ENCODE measurements at regions of chr16 and their contacts with region 1.

Region 1: GRCh38 chr16:11255737-11256660 is at the start of gene SOCS1:
- DNase-seq: peak; percentile 87
- H3K4me3 Mint-ChIP-seq: peak within 1 kb of the TSS; percentile 96
- H3K27ac Mint-ChIP-seq: peak within 1 kb of the TSS; percentile 97
- H3K4me1 Mint-ChIP-seq: peaks cover 53% of the 10 kb centered on the region
- H3K27me3 Mint-ChIP-seq: no peaks in the 10 kb centered on the region
- total RNA-seq, gene SOCS1: 127 to 133 TPM

Region 2: GRCh38 chr16:10949370-10949970 is 306.5 kb before region 1 on chr16:
- CTCF ChIA-PET with region 1: interaction called, 11 read pairs
- POLR2A ChIA-PET with region 1: no interaction called
- DNase-seq: peak; percentile 79
- H3K4me3 Mint-ChIP-seq: no peak overlapping the region
- H3K27ac Mint-ChIP-seq: peak overlapping the region; percentile 83
- H3K4me1 Mint-ChIP-seq: peaks cover 68% of the 10 kb centered on the region
- H3K27me3 Mint-ChIP-seq: no peaks in the 10 kb centered on the region

Region 3: GRCh38 chr16:10964039-10964890 is 291.7 kb before region 1 on chr16:
- CTCF ChIA-PET with region 1: interaction called, 72 read pairs
- POLR2A ChIA-PET with region 1: interaction called, 5 read pairs
- DNase-seq: peak; percentile 85
- H3K4me3 Mint-ChIP-seq: peak overlapping the region; percentile 55
- H3K27ac Mint-ChIP-seq: peak overlapping the region; percentile 85
- H3K4me1 Mint-ChIP-seq: peaks cover 83% of the 10 kb centered on the region
- H3K27me3 Mint-ChIP-seq: no peaks in the 10 kb centered on the region

Region 4: DNA sequence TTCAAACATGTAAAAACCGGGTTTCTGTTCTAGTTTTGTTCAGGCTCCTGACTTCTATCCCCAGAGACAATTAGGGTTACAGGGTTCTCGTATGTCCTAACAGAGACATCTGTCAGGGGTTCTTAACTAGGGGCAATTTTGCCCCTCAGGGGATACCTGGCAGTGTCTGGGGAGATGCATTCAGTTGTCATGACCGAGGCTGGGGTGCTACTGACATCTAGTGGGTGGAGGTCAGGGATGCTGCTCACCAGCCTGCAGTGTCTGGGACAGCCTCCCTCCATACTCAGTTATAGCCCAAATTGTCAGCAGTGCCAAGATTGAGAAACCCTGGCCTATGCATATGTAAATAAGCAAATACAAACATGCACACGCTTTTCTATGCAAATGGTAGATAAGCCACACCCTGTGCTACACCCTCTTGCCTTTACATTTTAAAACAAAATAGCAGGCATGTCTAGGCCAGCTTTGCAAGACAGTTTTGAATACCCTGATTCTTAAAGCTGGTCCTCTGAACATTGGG is 274.2 kb before region 1 on chr16:
- CTCF ChIA-PET with region 1: interaction called, 26 read pairs
- POLR2A ChIA-PET with region 1: interaction called, 5 read pairs
- DNase-seq: peak; percentile 65
- H3K4me3 Mint-ChIP-seq: peak overlapping the region; percentile 26
- H3K27ac Mint-ChIP-seq: peak overlapping the region; percentile 68
- H3K4me1 Mint-ChIP-seq: peaks cover 87% of the 10 kb centered on the region
- H3K27me3 Mint-ChIP-seq: no peaks in the 10 kb centered on the region

Region 5: DNA sequence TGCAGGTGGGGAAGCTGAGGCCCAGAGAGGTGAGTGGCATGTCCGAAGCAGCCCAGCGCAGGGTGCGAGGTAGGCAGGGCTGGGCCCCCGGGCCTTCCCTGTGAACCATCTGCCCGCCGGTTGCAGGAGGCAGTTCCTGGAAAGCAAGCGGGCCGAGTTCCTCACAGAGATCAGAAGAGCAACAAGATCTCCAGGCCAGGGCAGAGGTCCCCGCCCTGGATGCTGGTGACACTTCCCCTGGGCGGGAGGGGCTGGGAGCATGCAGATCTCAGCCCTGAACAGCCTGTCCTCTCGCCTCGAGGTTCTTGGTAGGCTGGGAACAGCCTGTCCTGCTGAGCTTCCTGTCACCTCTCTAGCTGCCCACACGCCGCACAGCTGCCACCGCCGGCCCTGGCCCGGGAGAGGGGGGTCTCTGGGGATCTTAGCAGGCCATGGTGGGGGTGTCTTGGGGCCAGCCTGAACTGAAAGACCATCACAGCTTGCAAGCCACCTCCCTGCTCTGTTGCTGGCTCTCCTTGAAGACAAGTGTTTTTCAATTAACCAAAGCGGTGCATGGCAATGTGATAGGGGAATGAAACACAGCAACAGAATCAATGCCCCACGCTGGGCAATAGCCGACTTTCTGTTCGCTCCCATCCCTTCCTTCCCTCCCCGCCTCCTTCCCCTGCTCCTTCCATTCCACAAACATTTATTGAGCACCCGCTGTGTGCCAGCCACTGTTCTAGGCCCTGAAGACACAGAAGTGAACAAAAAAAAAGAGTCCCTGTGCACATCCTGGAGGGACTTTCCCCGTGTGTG is 31.7 kb before region 1 on chr16:
- CTCF ChIA-PET with region 1: interaction called, 16 read pairs
- POLR2A ChIA-PET with region 1: interaction called, 13 read pairs
- DNase-seq: peak; percentile 81
- H3K4me3 Mint-ChIP-seq: peak overlapping the region; percentile 68
- H3K27ac Mint-ChIP-seq: peak overlapping the region; percentile 100
- H3K4me1 Mint-ChIP-seq: peaks cover 82% of the 10 kb centered on the region
- H3K27me3 Mint-ChIP-seq: no peaks in the 10 kb centered on the region

Region 6: GRCh38 chr16:11245988-11246387 is 10.0 kb before region 1 on chr16:
- CTCF ChIA-PET with region 1: interaction called, 15 read pairs
- POLR2A ChIA-PET with region 1: interaction called, 6 read pairs
- DNase-seq: peak; percentile 39
- H3K4me3 Mint-ChIP-seq: no peak overlapping the region
- H3K27ac Mint-ChIP-seq: no peak overlapping the region
- H3K4me1 Mint-ChIP-seq: peaks cover 54% of the 10 kb centered on the region
- H3K27me3 Mint-ChIP-seq: no peaks in the 10 kb centered on the region

Region 7: DNA sequence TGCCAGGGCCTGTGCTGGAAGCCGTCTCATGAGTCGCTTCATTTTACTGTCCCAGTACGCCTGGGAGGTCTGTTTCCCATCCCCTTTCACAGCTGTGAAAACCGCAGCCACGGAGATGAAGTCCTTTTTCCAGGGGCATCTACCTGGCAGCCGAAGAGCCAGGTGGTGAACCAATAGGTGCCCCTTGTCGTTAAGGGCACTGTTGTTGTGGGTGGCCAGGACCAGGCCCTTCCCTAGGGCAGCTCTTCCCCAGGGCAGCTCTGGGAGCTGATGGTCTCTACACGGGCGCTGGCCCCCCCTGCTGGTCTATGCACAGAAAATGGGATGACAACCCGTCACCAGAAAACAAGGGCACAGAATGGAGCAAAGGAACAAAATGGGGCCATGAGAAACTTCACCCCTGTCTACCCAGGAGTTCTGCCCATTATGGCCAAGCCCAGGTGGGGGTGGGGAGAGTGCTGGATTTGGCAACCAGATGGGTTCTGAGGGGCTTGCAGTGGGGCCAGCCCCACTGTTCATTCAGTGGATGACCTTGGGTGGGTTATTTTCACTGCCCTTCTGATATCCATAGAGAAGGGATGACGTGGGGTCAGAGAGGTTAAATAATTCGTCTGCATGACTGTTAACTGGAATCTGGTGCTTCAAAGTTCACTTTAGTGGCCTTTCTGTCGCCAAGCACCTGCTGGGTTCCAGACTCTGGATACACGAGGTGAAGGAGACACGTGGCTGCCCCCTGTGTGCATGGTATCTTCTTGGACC is 100.8 kb after region 1 on chr16:
- CTCF ChIA-PET with region 1: interaction called, 61 read pairs
- POLR2A ChIA-PET with region 1: interaction called, 23 read pairs
- DNase-seq: peak; percentile 59
- H3K4me3 Mint-ChIP-seq: peak overlapping the region; percentile 69
- H3K27ac Mint-ChIP-seq: peak overlapping the region; percentile 95
- H3K4me1 Mint-ChIP-seq: peaks cover 91% of the 10 kb centered on the region
- H3K27me3 Mint-ChIP-seq: peaks cover 5% of the 10 kb centered on the region

Measured in activated CD4-positive, alpha-beta T cell treated with anti-CD3 and anti-CD28 coated beads, Interleukin-2, amount 10 ng/mL, durations not matched to agents 7 days and 5 days (primary cell).